Heart left ventricle (tissue), 16 donors: ENCODE measurements at regions of chr22 and their contacts with region 1.

Region 1: DNA sequence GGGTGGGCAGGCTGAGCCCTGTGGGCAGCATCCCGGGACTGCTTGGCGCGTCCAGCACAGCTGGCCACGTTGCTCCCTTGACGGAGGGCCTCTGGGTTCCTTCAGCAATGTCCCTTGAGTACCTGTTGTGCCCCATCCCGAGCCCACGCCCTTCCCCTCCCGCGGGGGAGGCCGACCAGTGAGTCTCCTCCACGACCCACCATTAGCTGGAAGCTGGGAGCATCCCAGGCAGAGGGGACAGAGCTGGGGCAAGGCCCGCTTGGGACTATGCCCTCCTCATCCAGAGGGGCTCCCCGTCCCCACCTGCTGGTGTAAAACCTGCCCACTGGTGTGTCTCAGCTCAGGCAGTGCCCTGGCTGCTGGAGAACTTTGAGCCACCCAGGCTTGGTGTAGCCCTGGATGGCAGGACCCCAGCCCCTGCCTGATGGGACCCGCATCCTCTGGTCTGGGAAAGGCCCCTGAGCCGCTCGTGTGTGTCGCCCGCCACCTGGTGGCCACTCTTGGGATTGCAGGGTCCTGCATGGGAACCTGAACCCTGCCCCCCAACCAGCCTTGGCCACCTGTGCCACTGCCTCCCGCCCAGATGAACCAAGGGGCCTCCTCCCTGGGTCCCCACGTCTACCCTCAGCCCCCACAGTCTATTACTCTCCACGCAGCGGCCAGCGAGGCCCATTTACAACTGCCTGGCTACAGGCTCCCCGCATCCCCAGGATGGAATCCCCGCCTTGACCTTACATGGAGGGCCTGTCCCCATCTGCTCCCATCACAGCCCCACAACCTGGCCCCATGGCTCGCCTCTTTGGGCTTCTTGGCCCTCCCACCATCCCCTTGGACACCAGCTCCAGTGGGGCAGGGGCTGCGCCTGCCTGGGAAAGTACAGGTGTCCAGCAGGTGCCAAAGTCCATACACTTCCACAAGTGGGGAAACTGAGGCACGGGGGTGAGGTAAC is 16.6 kb upstream of the ARHGAP8 start:
- DNase-seq: peak; percentile 66 to 88 (median 70)
- ATAC-seq: peak in 3 of 4 donors; percentile 52 to 64 (median 59)
- H3K4me3 ChIP-seq: no peak overlapping the region
- H3K27ac ChIP-seq: no peak overlapping the region
- H3K4me1 ChIP-seq: peaks cover 0 to 11% (median 0%) of the 10 kb centered on the region in 12 donors
- H3K27me3 ChIP-seq: peaks cover 0 to 32% (median 17%) of the 10 kb centered on the region in 9 donors
- CTCF ChIP-seq: peak; percentile 92 to 100 (median 99)
- POLR2A ChIP-seq: no peak

Region 2: DNA sequence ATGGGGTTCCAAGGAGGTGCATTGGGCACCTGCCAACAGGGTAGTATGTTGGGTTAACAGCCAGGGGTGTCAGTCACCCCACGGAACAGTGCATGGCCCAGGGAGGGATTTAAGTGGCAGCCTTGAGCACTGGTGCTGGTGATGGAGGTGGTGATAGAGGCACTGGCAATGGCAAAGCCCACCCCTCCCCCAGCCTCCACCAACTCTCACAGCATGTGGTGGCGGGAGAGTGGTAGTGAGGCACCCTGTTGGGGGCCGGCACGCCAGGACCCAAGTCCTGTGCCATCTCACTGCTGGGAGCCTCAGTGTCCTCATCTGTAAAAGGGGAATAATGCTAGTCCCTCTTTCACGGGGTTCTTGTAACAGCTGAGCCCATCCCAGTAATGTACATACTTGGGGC is 1242.5 kb before region 1 on chr22:
- intact Hi-C with region 1: no loop called
- DNase-seq: no peak
- ATAC-seq: no peak
- H3K4me3 ChIP-seq: no peak overlapping the region
- H3K27ac ChIP-seq: no peak overlapping the region
- H3K4me1 ChIP-seq: peaks cover 0 to under 1% (median 0%) of the 10 kb centered on the region in 12 donors
- H3K27me3 ChIP-seq: peaks cover 0 to 20% (median 0%) of the 10 kb centered on the region in 9 donors
- CTCF ChIP-seq: no peak
- POLR2A ChIP-seq: no peak

Region 3: GRCh38 chr22:44697423-44698141 is 38.2 kb before region 1 on chr22:
- intact Hi-C with region 1: loop called (anchors 1 to 2 kb)
- DNase-seq: peak; percentile 68 to 88 (median 76)
- ATAC-seq: peak in 3 of 4 donors; percentile 52 to 68 (median 63)
- H3K4me3 ChIP-seq: no peak overlapping the region
- H3K27ac ChIP-seq: no peak overlapping the region
- H3K4me1 ChIP-seq: peaks cover 0 to 23% (median 10%) of the 10 kb centered on the region in 12 donors
- H3K27me3 ChIP-seq: peaks cover 0 to 2% (median 0%) of the 10 kb centered on the region in 9 donors
- CTCF ChIP-seq: peak; percentile 85 to 97 (median 90)
- POLR2A ChIP-seq: no peak